ENCODE measurements at regions of chr4 and their contacts with region 1.

Region 1: DNA sequence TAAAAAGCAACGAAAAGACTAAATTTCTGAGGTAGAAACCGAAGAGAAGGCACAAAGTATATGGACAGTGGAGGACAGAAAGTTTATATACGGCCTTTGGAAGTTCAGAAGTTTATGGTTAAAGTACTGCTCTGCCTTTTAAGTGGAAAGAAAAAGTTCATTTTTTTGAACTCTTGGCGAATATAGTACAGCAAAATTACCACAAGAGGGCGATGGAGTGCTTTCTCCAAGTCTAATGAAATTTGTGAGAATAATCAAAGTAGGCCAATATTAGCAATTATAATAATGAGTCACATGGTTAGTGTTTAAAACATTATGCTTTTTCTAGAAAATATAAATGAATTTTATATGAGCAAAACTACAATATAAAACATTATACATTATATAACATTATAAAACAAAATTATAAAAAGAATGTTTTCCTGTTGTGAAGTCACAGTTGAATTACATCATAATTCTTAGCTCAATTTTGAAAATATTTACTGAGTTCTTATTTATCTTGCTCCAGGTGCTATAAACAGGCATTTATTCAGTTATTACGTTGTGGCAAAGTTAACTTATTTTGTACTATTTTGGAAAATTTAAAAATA is 136.2 kb upstream of the BMPR1B start:
- DNase-seq: peak; percentile 38
- ATAC-seq: 0 out of 2 replicates have a peak, but pooled peaks have one; percentile 38
- H3K4me3 ChIP-seq: no peak overlapping the region
- H3K27ac ChIP-seq: no peak overlapping the region
- H3K4me1 ChIP-seq: no peaks in the 10 kb centered on the region
- H3K27me3 ChIP-seq: no peaks in the 10 kb centered on the region
- CTCF ChIP-seq: peak; percentile 60 to 81 (median 70); a peak in 5 of 6 replicates
- POLR2A ChIP-seq: no peak
- RAD21 ChIP-seq: peak; percentile 79

Region 2: DNA sequence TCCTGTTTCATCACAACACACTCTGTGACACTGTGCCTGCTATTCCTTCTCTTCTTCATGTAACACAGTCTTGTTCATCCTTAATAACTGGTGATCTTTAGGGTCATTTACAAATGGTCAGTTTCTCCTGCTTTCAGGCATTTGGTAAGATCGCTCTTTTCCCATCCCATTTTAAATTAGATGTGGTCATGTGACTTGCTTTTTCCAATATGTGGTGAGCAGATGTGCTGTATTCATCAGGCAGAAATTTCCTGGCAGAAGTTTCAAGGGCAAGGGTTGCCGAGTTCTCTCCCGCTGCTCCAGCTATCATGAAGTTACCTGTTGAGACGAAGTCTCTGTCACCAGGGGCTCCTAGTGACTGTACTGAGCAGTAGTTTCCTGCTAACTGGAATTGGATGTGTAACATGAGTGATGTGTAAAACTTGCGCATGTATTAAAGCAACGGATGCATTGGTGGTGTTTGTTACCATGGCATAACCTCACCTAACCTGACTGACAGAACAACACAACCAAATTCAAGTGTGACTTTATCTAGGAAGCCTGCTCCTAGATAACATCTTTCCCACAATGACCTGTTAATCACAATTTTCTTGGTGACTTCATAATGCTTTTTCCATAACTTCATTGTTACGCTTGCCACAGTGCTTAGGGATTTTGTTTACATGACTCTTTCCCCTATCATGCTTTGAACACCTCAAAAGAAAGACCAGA is 106.6 kb after region 1 on chr4:
- CTCF ChIA-PET with region 1: interaction called, 9 read pairs
- POLR2A ChIA-PET with region 1: no interaction called
- RAD21 ChIA-PET with region 1: no interaction called
- intact Hi-C with region 1: loop called (anchors 2 kb)
- DNase-seq: no peak
- ATAC-seq: no peak
- H3K4me3 ChIP-seq: no peak overlapping the region
- H3K27ac ChIP-seq: no peak overlapping the region
- H3K4me1 ChIP-seq: no peaks in the 10 kb centered on the region
- H3K27me3 ChIP-seq: no peaks in the 10 kb centered on the region
- CTCF ChIP-seq: no peak
- POLR2A ChIP-seq: no peak
- RAD21 ChIP-seq: no peak

Region 3: DNA sequence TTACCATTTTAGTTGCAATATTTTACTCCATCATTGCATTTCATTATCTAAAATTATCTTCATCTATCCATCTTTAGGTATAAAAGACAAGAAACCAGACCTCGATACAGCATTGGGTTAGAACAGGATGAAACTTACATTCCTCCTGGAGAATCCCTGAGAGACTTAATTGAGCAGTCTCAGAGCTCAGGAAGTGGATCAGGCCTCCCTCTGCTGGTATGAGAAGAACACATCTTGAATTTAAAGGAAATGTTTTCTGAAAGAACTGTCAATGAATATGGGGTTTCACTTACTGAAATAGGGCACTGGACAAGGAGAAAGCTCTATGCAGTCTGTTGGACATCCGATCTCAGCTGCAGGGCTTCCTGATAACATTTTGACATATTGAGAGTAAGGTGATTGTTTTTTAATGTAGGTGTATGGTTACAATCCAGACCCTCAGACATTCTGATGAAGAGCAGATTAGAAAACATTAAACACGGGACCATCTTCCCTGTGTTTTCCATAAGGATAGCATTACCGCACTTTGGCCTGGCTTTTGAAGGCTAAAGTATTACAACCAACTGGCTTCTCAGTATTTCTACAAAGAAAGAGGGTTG is 503.4 kb after region 1 on chr4:
- CTCF ChIA-PET with region 1: interaction called, 23 read pairs
- POLR2A ChIA-PET with region 1: no interaction called
- RAD21 ChIA-PET with region 1: no interaction called
- intact Hi-C with region 1: loop called (anchors 1 kb)
- DNase-seq: peak; percentile 56
- ATAC-seq: peak; percentile 94
- H3K4me3 ChIP-seq: no peak overlapping the region
- H3K27ac ChIP-seq: no peak overlapping the region
- H3K4me1 ChIP-seq: peaks cover 4% of the 10 kb centered on the region in 2 experiments; a peak in 3 of 4 replicates
- H3K27me3 ChIP-seq: no peaks in the 10 kb centered on the region
- CTCF ChIP-seq: peak; percentile 49 to 66 (median 63)
- POLR2A ChIP-seq: no peak
- RAD21 ChIP-seq: peak; percentile 73